ENCODE measurements at regions of chr20 and their contacts with region 1.

Region 1: DNA sequence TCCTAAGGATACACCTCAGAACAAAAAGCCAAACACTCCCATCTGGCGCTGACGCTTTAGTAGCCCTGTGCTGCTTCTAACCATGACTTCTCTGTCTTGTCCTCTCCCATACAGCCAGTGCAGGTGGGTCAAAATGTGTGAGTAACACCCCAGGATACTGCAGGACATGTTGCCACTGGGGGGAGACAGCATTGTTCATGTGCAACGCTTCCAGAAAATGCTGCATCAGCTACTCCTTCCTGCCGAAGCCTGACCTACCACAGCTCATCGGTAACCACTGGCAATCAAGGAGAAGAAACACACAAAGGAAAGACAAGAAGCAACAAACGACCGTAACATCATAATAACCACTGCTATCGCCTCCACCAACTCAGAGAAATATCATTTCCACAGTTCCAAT is 1.4 kb downstream of the DEFB132 start:
- DNase-seq: no peak
- H3K4me3 ChIP-seq: no peak overlapping the region
- H3K27ac ChIP-seq: no peak overlapping the region
- H3K4me1 ChIP-seq: no peaks in the 10 kb centered on the region
- H3K27me3 ChIP-seq: peaks cover 5% of the 10 kb centered on the region
- CTCF ChIP-seq: no peak
- EP300 ChIP-seq: no peak
- POLR2A ChIP-seq: no peak

Region 2: GRCh38 chr20:208942-209566 is 49.9 kb before region 1 on chr20:
- in situ Hi-C with region 1: no loop called
- intact Hi-C with region 1: loop called (anchors 5 kb)
- DNase-seq: no peak
- H3K4me3 ChIP-seq: no peak overlapping the region
- H3K27ac ChIP-seq: no peak overlapping the region
- H3K4me1 ChIP-seq: no peaks in the 10 kb centered on the region
- H3K27me3 ChIP-seq: no peaks in the 10 kb centered on the region
- CTCF ChIP-seq: peak; percentile 38 to 57 (median 42)
- EP300 ChIP-seq: no peak
- POLR2A ChIP-seq: no peak

Region 3: GRCh38 chr20:309841-310644 is 51.1 kb after region 1 on chr20:
- in situ Hi-C with region 1: no loop called
- intact Hi-C with region 1: no loop called
- DNase-seq: peak; percentile 91
- H3K4me3 ChIP-seq: peak overlapping the region; percentile 4 to 42 (median 26)
- H3K27ac ChIP-seq: peak overlapping the region; percentile 79 to 88 (median 81)
- H3K4me1 ChIP-seq: peaks cover 0 to 13% (median 0%) of the 10 kb centered on the region in 4 donors
- H3K27me3 ChIP-seq: no peaks in the 10 kb centered on the region
- CTCF ChIP-seq: no peak
- EP300 ChIP-seq: no peak
- POLR2A ChIP-seq: no peak